Heart right ventricle (tissue), 16 donors: ENCODE measurements at regions of chr20 and their contacts with region 1.

Region 1: DNA sequence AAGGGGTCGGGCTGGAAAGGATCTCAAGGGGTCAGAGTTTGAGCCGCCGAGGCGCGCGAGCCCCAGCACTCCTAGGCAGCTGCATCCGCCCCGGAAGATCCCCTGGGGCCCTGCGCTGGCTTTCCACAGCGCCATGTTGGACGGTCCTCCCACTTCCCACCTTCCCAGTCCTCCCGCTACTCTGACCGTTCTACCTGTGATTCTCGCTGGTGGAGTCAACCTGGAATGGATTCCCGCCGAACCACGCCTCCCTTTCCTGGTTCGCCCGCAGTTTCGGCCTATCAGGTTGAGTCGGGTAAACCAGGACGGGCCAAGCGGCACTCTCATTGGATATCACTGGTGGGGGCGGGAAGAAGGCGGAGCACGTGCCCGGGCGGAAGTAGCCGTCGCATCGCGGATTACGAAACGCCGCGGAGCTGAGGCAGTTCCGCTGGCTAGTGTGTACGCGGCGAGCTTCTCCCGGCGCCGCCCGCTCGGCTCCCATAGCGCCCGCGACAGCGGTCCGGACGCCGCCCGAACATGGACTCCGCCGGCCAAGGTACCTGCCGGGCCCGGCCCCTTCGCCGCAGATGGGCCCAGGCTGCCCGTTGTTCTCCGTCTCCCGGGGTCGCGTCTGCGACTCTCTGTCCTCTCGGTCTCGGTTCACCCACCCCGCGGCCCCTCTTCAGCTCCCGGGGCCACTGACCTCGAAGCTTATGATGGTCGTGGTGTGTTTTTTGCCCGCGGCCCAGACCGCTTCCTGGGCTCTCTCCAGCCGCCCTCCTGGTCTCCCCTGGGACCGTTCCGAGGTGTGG is at the start of gene TPD52L2:
- DNase-seq: peak; percentile 98 to 99
- ATAC-seq: peak; percentile 90 to 97 (median 96)
- H3K4me3 ChIP-seq: peak within 1 kb of the TSS; percentile 74 to 97 (median 85)
- H3K27ac ChIP-seq: peak within 1 kb of the TSS; percentile 76 to 98 (median 94)
- H3K4me1 ChIP-seq: peaks cover 6 to 64% (median 33%) of the 10 kb centered on the region in 9 donors
- H3K27me3 ChIP-seq: no peaks in the 10 kb centered on the region
- CTCF ChIP-seq: no peak
- total RNA-seq, gene TPD52L2: 60.1 to 83.0 (median 72.8) TPM

Region 2: GRCh38 chr20:63409459-63410435 is 455.3 kb before region 1 on chr20:
- intact Hi-C with region 1: no loop called
- DNase-seq: no peak
- ATAC-seq: no peak
- H3K4me3 ChIP-seq: no peak overlapping the region
- H3K27ac ChIP-seq: no peak overlapping the region
- H3K4me1 ChIP-seq: peaks cover 0 to 7% (median 0%) of the 10 kb centered on the region in 9 donors
- H3K27me3 ChIP-seq: peaks cover 8 to 47% (median 42%) of the 10 kb centered on the region in 7 donors
- CTCF ChIP-seq: no peak

Region 3: DNA sequence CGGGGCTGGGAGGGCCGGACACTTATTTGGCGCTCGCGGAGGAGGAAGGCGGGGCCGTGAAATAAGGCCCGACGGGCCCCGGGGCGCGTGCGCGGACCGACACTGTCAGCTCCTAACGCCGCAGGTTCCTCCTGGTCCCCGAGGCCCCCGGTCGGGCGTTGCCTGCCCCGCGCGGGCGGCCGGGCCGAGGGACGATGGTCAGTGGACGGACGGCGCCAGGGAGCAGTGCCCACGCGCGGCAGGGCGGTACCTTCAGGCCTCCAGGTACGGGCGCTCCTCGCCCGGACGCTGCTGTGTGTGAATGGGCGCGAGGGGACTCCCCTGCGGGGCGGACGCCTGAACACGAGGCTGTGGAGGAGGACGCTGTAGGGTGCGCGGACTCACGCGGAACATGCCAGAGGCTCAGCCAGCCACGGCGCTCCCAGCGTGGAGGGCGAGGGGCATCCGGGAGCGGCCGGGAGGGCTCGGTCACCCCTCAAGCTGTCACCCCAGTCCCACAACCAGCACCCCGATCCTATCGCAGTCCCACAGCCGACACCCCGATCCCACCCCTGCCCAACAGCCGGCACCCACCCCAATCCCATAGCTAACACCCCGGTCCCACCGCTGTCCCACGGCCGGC is 237.8 kb before region 1 on chr20:
- intact Hi-C with region 1: loop called in 2 of 10 experiments (anchors 10 kb)
- DNase-seq: peak; percentile 94 to 95
- ATAC-seq: peak; percentile 90 to 94 (median 92)
- H3K4me3 ChIP-seq: peak overlapping the region; percentile 65 to 99 (median 92)
- H3K27ac ChIP-seq: peak overlapping the region; percentile 90 to 99 (median 97)
- H3K4me1 ChIP-seq: peaks cover 0 to 33% (median 24%) of the 10 kb centered on the region in 9 donors
- H3K27me3 ChIP-seq: no peaks in the 10 kb centered on the region
- CTCF ChIP-seq: no peak

Region 4: GRCh38 chr20:63707549-63708300 is 157.3 kb before region 1 on chr20 and contains the starts of genes ARFRP1 and ZGPAT:
- intact Hi-C with region 1: loop called in 1 of 10 experiments (anchors 5 kb)
- DNase-seq: peak; percentile 91 to 93
- ATAC-seq: peak; percentile 93 to 98 (median 96)
- H3K4me3 ChIP-seq: peak within 1 kb of the TSS; percentile 77 to 99 (median 94)
- H3K27ac ChIP-seq: peak within 1 kb of the TSS; percentile 84 to 98 (median 94)
- H3K4me1 ChIP-seq: peaks cover 6 to 45% (median 32%) of the 10 kb centered on the region in 9 donors
- H3K27me3 ChIP-seq: no peaks in the 10 kb centered on the region
- CTCF ChIP-seq: peak in 1 of 9 donors; percentile 7
- total RNA-seq, gene ARFRP1: 34.9 to 51.6 (median 38.8) TPM
- total RNA-seq, gene ZGPAT: 11.8 to 21.7 (median 14.7) TPM

Region 5: GRCh38 chr20:63791497-63792156 is 73.4 kb before region 1 on chr20:
- intact Hi-C with region 1: loop called in 9 of 10 experiments (anchors 1 to 10 kb)
- DNase-seq: peak; percentile 64 to 66
- ATAC-seq: peak in 7 of 8 donors; percentile 19 to 55 (median 37)
- H3K4me3 ChIP-seq: peak overlapping the region in 2 of 10 donors; percentile 12 to 15
- H3K27ac ChIP-seq: peak overlapping the region; percentile 22 to 84 (median 77)
- H3K4me1 ChIP-seq: peaks cover 18 to 74% (median 54%) of the 10 kb centered on the region in 9 donors
- H3K27me3 ChIP-seq: peaks cover 0 to 4% (median 0%) of the 10 kb centered on the region in 7 donors
- CTCF ChIP-seq: no peak

Region 6: GRCh38 chr20:63830841-63831588 is 34.0 kb before region 1 on chr20 and contains the start of gene ZBTB46:
- intact Hi-C with region 1: loop called in 4 of 10 experiments (anchors 1 to 5 kb)
- DNase-seq: peak; percentile 62 to 76
- ATAC-seq: peak in 5 of 8 donors; percentile 7 to 51 (median 36)
- H3K4me3 ChIP-seq: peak within 1 kb of the TSS; percentile 42 to 97 (median 70)
- H3K27ac ChIP-seq: peak within 1 kb of the TSS; percentile 80 to 98 (median 90)
- H3K4me1 ChIP-seq: peaks cover 26 to 75% (median 66%) of the 10 kb centered on the region in 9 donors
- H3K27me3 ChIP-seq: peaks cover 0 to 63% (median 0%) of the 10 kb centered on the region in 7 donors
- CTCF ChIP-seq: no peak
- total RNA-seq, gene ZBTB46: 10.2 to 25.4 (median 14.7) TPM

Region 7: GRCh38 chr20:63942250-63942959 is 77.4 kb after region 1 on chr20:
- intact Hi-C with region 1: no loop called
- DNase-seq: peak in 1 of 2 donors; percentile 35
- ATAC-seq: peak in 5 of 8 donors; percentile 18 to 55 (median 41)
- H3K4me3 ChIP-seq: no peak overlapping the region
- H3K27ac ChIP-seq: peak overlapping the region; percentile 27 to 84 (median 70)
- H3K4me1 ChIP-seq: peaks cover 16 to 51% (median 40%) of the 10 kb centered on the region in 9 donors
- H3K27me3 ChIP-seq: no peaks in the 10 kb centered on the region
- CTCF ChIP-seq: no peak